ENCODE measurements at regions of chr5 and their contacts with region 1.

Region 1: GRCh38 chr5:110159202-110159601 is 469.5 kb downstream of the MAN2A1 start:
- DNase-seq: no peak
- ATAC-seq: no peak
- H3K4me3 ChIP-seq: no peak overlapping the region
- H3K4me3 Mint-ChIP-seq: no peak overlapping the region
- H3K27ac ChIP-seq: no peak overlapping the region
- H3K27ac Mint-ChIP-seq: no peak overlapping the region
- H3K4me1 ChIP-seq: no peaks in the 10 kb centered on the region
- H3K4me1 Mint-ChIP-seq: no peaks in the 10 kb centered on the region
- H3K27me3 ChIP-seq: no peaks in the 10 kb centered on the region
- H3K27me3 Mint-ChIP-seq: no peaks in the 10 kb centered on the region
- CTCF ChIP-seq: no peak

Region 2: DNA sequence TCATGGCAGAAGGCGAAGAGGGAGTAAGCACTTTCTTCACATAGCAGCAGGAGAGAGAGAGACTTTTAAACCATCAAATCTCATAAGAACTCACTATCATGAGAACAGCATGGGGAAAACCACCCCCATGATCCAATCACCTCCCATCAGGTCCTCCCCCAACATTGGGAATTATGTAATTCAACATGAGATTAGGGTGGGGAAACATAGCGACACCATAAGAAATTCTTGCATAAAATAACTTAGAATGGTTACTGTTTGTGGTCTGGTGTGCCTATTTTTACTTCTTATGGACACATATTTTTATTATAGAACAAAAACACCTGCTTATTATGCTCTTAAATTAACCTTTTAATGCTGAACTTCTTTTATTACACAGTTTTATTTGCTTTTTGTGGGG is 1047.5 kb before region 1 on chr5:
- CTCF ChIA-PET with region 1: no interaction called
- POLR2A ChIA-PET with region 1: no interaction called
- intact Hi-C with region 1: loop called in 1 of 2 experiments (anchors 5 kb)
- DNase-seq: no peak
- ATAC-seq: no peak
- H3K4me3 ChIP-seq: no peak overlapping the region
- H3K4me3 Mint-ChIP-seq: no peak overlapping the region
- H3K27ac ChIP-seq: no peak overlapping the region
- H3K27ac Mint-ChIP-seq: no peak overlapping the region
- H3K4me1 ChIP-seq: no peaks in the 10 kb centered on the region
- H3K4me1 Mint-ChIP-seq: no peaks in the 10 kb centered on the region
- H3K27me3 ChIP-seq: no peaks in the 10 kb centered on the region
- H3K27me3 Mint-ChIP-seq: no peaks in the 10 kb centered on the region
- CTCF ChIP-seq: no peak